ENCODE measurements at regions of chr1 and their contacts with region 1.

Region 1: DNA sequence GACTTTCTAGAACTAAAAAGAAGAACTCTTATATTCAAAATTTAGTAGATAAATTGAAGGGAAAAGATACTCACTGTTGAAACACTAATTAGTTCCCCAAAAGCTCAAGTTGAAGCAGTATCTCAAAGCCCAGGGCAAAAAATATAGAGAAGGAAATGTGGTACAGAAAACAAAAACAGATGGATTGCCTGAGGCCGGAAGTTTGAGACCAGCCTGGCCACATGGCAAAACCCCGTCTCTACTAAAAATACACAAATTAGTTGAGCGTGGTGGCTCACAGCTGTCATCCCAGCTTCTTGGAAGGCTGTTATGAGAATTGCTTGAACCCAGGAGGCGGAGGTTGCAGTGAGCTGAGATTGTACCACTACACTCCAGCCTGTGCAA is 36.0 kb downstream of the FAM177B start:
- DNase-seq: peak in 1 of 14 experiments; percentile 18
- ATAC-seq: no peak
- H3K4me3 ChIP-seq: no peak overlapping the region
- H3K4me3 Mint-ChIP-seq: peak overlapping the region; percentile 50
- H3K27ac ChIP-seq: no peak overlapping the region
- H3K27ac Mint-ChIP-seq: peak overlapping the region; percentile 80
- H3K4me1 ChIP-seq: peaks cover 13% of the 10 kb centered on the region
- H3K4me1 Mint-ChIP-seq: peaks cover 27% of the 10 kb centered on the region
- H3K27me3 ChIP-seq: no peaks in the 10 kb centered on the region
- H3K27me3 Mint-ChIP-seq: no peaks in the 10 kb centered on the region
- CTCF ChIP-seq: no peak

Region 2: GRCh38 chr1:222909586-222909985 is 136.6 kb after region 1 on chr1:
- CTCF ChIA-PET with region 1: no interaction called
- POLR2A ChIA-PET with region 1: no interaction called
- intact Hi-C with region 1: loop called in 1 of 2 experiments (anchors 10 kb)
- DNase-seq: no peak
- ATAC-seq: no peak
- H3K4me3 ChIP-seq: no peak overlapping the region
- H3K4me3 Mint-ChIP-seq: no peak overlapping the region
- H3K27ac ChIP-seq: no peak overlapping the region
- H3K27ac Mint-ChIP-seq: no peak overlapping the region
- H3K4me1 ChIP-seq: no peaks in the 10 kb centered on the region
- H3K4me1 Mint-ChIP-seq: no peaks in the 10 kb centered on the region
- H3K27me3 ChIP-seq: no peaks in the 10 kb centered on the region
- H3K27me3 Mint-ChIP-seq: no peaks in the 10 kb centered on the region
- CTCF ChIP-seq: no peak

Region 3: DNA sequence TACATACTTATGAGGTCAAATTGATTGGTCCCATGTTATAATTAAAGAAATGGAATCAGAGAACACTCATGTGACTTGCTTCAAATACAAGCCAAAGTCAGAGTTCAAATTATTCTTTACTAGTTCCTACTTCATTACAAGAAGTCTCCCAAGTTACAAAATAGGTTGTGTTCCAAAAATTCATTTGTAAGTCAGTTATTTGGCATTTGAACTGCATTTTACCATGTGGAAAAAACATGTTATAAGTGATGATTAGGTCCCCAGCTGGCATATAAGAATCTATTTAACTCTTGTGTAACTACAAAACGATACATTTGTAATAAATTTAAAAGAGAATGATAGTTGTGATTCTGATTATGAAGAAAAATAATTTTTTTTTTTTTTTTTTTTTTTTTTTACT is 166.0 kb after region 1 on chr1:
- CTCF ChIA-PET with region 1: no interaction called
- POLR2A ChIA-PET with region 1: no interaction called
- intact Hi-C with region 1: no loop called
- DNase-seq: no peak
- ATAC-seq: no peak
- H3K4me3 ChIP-seq: no peak overlapping the region
- H3K4me3 Mint-ChIP-seq: no peak overlapping the region
- H3K27ac ChIP-seq: no peak overlapping the region
- H3K27ac Mint-ChIP-seq: no peak overlapping the region
- H3K4me1 ChIP-seq: no peaks in the 10 kb centered on the region
- H3K4me1 Mint-ChIP-seq: no peaks in the 10 kb centered on the region
- H3K27me3 ChIP-seq: no peaks in the 10 kb centered on the region
- H3K27me3 Mint-ChIP-seq: no peaks in the 10 kb centered on the region
- CTCF ChIP-seq: no peak